GM10248 (cell line): ENCODE measurements at regions of chr7 and their contacts with region 1.

Region 1: DNA sequence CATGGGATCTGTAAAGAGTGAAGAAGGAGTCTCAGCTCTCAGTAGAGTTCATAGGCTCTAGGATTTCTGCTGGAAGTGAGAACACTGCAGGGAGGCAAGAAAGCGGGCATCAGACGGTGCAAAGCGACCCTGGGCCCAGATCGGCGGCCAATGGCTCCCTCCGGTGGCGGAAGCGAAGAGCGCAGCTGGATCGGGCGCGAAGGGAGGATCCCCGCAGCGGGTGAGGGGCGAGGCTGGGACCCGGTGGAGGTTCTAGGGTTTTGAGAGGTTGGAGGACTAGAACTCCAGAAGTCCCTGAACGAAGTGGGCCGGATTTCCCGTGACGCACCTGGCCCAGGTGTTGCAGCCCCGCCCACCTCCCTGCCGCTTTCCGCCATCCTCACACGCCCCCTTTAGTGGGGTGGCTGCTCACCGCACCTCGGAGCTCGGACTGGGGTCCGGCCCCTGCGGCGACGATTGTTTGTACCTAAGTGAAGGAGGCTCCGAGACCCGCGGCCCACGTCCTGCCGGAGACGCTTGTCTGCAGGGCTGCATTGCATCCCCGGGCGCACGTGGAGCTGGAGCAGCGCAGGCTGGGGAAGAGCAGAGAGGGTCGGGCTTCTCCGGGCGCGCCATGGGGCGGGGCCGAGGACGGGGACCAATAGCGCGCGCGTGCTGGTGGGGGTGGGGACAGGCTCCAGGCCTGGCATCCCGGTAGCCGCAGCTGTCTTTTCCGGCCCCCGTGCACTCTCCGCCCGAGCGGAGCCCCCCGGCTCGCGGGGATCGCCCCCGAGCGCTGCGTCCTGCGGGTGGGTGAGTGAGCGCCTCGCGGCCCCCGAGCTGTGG is at the start of gene SLC12A9:
- DNase-seq: peak; percentile 96
- CTCF ChIP-seq: peak; percentile 90

Region 2: GRCh38 chr7:100726996-100727761 is 125.1 kb before region 1 on chr7:
- CTCF ChIA-PET with region 1: interaction called, 16 read pairs
- POLR2A ChIA-PET with region 1: no interaction called
- DNase-seq: no peak
- CTCF ChIP-seq: no peak

Region 3: DNA sequence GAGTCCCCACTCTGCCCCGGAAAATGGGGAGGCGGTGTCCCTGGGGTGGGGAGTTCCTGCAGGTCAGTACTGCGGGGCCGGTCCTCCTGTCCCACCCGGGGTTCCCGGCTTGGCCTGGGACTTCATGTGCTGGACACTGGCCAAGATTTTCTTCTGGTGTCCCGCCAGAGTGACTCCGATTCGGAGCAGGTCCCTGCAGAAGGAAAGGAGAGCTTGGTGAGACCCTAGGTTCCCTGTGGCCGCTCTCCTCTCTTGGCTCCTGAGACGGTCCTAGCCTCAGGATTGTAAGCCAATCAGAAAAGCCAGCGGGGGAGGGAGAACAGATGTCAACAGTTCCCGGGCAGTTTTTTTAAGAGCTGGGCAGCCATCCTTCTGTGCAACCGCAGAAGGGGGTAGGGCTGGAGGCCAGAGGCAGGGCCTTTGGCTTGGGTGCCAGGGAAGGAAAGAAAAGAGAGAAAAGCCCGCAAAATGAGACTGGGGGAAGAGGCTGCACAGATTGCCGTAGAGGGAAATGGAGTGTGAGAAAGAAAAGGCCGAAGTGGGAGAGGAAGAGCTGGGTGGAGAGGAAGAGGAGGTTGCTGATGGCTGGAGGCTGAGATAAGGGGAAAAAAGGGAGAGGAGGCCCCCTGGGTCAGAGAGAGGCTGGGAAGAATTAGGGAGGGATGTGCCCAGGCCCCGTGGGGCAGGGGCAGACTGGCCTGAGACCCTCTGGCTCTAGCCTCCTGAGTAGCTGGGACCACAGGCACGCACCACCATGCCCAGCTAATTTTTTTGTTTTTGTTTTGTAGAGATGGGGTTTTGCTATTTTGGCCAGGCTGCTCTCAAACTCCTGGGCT is 48.6 kb before region 1 on chr7:
- CTCF ChIA-PET with region 1: interaction called, 188 read pairs
- POLR2A ChIA-PET with region 1: no interaction called
- DNase-seq: peak; percentile 94
- CTCF ChIP-seq: no peak

Region 4: GRCh38 chr7:100837099-100837836 is 15.0 kb before region 1 on chr7:
- CTCF ChIA-PET with region 1: interaction called, 19 read pairs
- POLR2A ChIA-PET with region 1: interaction called, 4 read pairs
- DNase-seq: peak; percentile 89
- CTCF ChIP-seq: no peak

Region 5: DNA sequence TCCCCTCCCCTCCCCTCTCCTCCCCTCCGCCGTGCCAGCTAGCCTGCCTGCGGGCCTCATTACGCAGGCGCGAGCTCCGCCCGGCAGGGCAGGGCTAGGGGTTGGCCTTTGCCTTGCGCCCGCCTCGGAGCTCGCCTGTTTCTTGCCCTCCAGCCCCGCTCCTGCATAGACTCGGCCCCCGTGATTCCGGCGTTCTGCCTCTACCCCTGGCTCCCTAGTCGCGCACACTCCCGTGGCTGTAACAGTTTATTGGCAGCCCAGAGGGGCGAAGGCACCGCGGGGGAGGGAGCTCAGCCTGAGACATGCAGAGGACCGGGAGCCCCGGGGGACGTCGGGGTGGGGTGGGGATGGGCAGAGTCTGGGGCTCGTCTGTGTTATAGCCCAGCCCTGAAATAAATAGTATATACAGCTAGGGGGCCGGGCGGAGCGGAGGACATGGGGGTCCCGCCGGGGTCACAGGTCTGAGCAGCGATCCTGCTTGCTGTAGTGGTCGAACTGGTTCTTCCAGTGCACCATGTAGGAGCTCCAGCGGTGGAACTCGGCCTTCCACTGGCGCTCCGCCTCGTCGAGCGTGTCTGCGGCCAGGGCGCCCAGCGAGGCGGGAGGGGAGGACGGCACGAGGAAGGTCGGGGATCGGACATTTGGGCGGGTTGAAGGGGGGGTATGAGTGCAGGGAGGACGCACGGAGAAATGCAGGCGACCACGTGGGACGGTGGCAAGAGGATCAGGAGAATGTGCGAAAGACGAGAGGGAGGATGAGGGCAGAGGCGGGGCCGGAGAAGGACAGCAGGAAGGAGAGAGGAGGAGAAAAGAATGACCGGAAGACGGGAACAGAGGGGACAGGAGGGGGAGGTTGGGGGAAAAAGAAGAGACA is 37.7 kb after region 1 on chr7:
- CTCF ChIA-PET with region 1: interaction called, 11 read pairs
- POLR2A ChIA-PET with region 1: no interaction called
- DNase-seq: peak; percentile 99
- CTCF ChIP-seq: no peak

Region 6: DNA sequence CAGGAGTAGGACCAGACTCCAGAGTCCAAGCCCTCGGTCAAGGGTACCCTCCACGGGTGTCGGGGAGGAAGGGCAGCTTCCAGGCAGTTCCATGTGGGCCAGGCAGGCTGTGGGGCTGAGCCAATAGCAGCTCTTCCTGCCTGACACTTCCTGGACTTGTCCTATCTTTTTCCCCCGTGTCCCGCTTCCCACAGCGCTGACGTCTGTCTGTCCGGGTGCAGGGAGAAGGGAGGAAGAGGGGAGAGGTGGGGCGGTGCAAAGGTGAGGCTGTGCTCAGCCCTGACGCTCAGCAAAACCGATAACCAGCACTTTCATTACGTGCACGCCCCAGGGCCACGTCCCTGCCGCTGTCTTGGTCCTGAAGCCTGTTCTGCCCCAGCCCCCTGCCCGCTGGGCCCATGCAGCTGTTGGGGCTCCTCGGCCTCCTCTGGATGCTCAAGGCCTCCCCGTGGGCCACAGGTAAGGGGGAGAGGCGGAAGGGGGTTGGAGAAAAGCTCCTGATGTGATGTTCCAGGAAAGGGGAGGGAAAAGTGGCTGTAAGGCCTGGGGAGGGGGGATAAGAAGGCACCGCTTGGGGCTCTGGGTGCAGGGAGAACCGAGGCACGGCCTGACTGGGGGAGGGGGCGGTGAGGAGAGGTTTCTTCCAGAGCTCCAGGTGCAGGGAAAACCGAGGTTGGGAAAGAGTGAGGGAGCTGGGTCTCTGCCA is 97.1 kb after region 1 on chr7 and contains the start of gene MUC3A:
- CTCF ChIA-PET with region 1: no interaction called
- POLR2A ChIA-PET with region 1: no interaction called
- DNase-seq: no peak
- CTCF ChIP-seq: no peak